ENCODE measurements at regions of chr6 and their contacts with region 1.

Region 1: DNA sequence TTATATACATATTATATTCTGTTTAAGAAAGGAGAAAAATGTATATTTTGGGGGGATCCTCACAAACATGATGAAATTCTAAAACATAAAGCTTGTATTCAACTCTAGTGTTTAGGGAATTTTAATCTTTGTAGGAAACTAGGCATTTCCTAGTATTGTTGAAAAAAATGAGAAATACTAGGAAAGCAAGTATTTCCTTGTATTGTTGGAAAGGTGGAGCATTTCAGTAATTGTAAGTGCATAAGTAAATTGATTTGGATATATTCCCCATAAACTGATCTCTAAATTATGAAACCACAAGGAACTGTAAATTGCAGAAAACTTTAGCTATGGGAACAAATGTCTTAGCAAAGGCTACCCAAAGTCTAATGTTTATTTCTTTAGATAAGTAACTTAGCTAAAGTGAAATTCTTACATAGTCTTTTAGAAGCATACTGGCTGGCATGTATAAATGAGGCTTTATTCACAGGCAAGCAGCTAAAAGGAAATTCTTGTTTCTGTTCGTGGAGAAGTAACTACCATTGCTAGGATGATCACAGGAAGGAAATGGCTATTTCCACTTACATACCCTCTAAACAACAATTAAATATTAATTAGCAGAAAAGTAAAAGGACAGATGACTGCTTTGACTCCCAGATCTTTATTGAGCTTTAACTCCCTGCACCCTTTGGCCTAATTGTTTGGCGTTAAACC is 19.9 kb upstream of the NRN1 start:
- DNase-seq: no peak
- ATAC-seq: no peak

Region 2: GRCh38 chr6:6008648-6009421 is 17.8 kb before region 1 on chr6:
- intact Hi-C with region 1: loop called (anchors 2 kb)
- DNase-seq: peak; percentile 88
- ATAC-seq: peak; percentile 74

Region 3: DNA sequence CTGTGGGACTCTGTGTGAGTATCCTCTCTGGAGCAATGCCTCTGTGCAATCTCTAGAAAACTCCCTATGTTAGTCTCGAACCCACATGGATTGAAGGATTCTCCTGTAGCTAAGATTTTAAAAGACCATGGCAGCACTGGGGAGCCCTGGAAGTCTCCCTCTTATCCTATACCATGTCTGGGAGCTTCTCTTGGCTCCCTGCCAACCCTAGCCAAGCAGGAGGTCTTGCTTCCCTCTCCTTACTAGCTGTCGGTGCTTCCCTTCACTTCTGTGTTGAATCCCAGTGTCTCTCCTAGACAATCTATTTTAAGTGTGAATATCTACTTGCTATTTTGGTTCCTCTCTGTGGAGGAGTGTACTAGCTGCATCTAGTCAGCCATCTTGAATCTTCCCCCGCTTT is 98.8 kb after region 1 on chr6:
- intact Hi-C with region 1: no loop called
- DNase-seq: no peak
- ATAC-seq: no peak

Measured in Right ventricle myocardium inferior (tissue), 1 donor.